Breast epithelium (tissue), 4 donors: ENCODE measurements at regions of chr12 and their contacts with region 1.

Region 1: DNA sequence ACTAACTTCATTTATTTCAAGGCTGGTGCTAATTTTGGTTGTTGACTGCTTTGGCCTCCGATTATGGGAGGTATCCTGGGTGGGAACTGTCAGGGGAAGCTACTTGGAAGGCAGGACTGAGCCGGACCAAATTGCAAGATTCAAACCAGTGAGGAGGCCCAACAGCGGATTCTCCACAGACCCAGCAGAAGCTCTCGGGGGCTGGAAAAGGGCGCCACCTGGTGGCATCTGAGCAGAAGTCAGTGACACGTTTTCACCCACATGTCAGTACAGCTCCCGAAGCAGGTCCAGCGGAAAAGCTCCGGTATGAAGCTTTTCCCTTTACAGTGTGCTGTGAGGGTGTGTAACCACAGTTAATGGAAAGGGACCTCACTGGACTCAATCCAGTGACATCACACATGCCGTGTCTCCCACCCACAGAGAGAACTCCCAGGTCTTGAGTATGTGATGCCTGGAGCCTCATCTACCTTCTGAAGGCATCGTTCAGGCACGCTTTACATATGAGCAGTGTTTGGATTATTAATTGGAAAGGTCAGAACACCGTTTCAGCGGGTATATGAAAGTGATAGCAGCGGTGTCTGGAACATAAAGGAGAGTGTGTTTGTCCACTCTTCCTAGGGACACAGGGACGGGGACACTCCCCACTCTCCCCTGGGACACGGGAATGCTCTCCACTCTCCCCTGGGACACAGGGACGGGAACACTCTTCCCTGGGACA is 3.6 kb upstream of the P2RX2 start:
- DNase-seq: peak; percentile 65 to 87
- H3K4me3 ChIP-seq: no peak overlapping the region
- H3K27ac ChIP-seq: no peak overlapping the region
- H3K4me1 ChIP-seq: peaks cover 0 to 4% of the 10 kb centered on the region in 2 donors
- H3K27me3 ChIP-seq: peaks cover 11 to 64% of the 10 kb centered on the region in 2 donors
- CTCF ChIP-seq: peak; percentile 58 to 80 (median 79)
- POLR2A ChIP-seq: no peak

Region 2: GRCh38 chr12:132414634-132415326 is 200.2 kb before region 1 on chr12:
- intact Hi-C with region 1: loop called (anchors 10 kb)
- DNase-seq: peak; percentile 63 to 78
- H3K4me3 ChIP-seq: peak overlapping the region in 1 of 3 donors; percentile 41
- H3K27ac ChIP-seq: no peak overlapping the region
- H3K4me1 ChIP-seq: peaks cover 0 to 4% of the 10 kb centered on the region in 2 donors
- H3K27me3 ChIP-seq: peaks cover 3 to 50% of the 10 kb centered on the region in 2 donors
- CTCF ChIP-seq: peak; percentile 57 to 92 (median 86)
- POLR2A ChIP-seq: no peak